Activated CD4-positive, alpha-beta memory T cell treated with anti-CD3 and anti-CD28 coated beads for 36 hours (primary cell): ENCODE measurements at regions of chr16 and their contacts with region 1.

Region 1: DNA sequence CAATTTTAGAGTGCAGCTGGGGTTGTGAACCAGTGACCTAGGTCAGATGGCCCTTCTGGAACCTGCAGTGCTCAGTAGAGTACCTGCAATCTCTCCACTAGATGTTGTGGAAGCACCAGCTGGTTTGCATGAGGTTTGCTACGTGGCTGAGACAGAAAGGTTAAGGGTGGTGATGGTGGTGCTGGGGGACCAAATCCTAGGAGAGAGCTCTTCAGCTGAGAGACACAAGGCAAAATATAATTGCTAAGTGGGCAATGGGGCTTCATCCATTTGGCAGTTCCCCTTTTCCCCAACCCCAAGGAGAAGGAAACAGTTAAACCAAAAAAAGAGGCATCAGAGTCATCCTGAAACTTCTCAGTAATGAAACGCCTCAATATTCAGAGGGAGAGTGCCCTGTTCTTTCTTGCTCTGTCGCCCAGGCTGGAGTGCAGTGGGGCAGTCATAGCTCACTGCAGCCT is 13.9 kb downstream of the ITPRIPL2 start:
- DNase-seq: peak; percentile 33
- H3K4me3 Mint-ChIP-seq: no peak overlapping the region
- H3K27ac Mint-ChIP-seq: peak overlapping the region; percentile 82
- H3K4me1 Mint-ChIP-seq: peaks cover 35% of the 10 kb centered on the region
- H3K27me3 Mint-ChIP-seq: peaks cover 2% of the 10 kb centered on the region

Region 2: DNA sequence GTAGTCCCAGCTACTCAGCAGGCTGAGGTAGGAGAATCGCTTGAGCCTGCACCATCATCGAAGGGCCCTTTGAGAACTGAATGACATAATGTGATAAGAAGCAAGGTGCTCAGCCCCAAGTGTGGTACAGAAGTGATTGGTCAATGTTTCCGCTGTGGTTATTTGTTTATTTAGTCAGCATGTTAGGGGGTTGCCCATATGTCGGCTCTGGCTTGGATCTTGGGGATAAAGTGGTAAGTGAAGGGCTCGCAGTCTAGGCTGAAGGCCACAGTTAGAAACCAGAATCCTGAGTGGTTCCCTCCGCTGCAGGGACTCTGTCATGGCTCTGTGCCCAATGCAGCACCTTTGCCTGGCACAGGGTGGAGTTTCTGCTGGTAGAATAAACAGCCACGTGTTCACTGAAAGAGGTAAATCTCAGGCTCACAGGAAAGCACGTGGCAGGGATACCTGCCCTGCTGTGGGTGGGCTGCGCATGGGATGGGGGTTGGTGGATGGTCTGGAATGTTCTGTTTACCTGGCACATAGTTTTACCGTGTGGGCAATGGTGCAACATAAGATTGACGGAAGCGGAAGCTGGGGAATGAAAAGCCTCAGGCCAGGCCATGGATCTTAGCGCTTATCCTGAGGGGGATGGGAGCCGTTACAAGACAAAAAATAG is 75.8 kb after region 1 on chr16:
- CTCF ChIA-PET with region 1: no interaction called
- POLR2A ChIA-PET with region 1: no interaction called
- intact Hi-C with region 1: no loop called
- DNase-seq: no peak
- H3K4me3 Mint-ChIP-seq: no peak overlapping the region
- H3K27ac Mint-ChIP-seq: no peak overlapping the region
- H3K4me1 Mint-ChIP-seq: no peaks in the 10 kb centered on the region
- H3K27me3 Mint-ChIP-seq: no peaks in the 10 kb centered on the region

Region 3: DNA sequence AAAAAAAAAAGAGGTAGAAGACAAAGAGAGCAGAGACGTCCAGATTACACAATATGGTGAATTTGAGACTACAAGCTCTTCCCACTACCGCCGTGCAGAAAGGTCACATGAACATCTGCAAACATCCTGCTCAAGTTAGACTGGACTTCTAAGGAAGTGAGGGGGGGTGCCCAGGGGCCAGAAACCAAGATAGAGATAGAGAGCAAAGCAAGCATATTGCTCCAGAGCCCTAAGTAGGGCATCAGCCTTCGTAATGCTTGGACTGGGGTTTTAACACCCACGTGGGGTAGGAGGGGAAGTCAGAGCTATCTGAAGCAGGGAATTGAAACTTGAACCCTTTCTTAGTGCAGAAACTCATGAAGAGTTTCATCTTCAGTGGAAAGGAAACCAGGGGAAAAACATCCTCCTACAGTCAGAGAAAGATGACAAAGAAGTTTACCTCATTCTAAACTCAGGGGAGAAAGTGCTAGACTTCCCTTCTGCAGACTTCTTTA is 166.5 kb after region 1 on chr16:
- CTCF ChIA-PET with region 1: no interaction called
- POLR2A ChIA-PET with region 1: no interaction called
- intact Hi-C with region 1: loop called (anchors 2 kb)
- DNase-seq: peak; percentile 73
- H3K4me3 Mint-ChIP-seq: peak overlapping the region; percentile 2
- H3K27ac Mint-ChIP-seq: peak overlapping the region; percentile 76
- H3K4me1 Mint-ChIP-seq: peaks cover 28% of the 10 kb centered on the region
- H3K27me3 Mint-ChIP-seq: peaks cover 13% of the 10 kb centered on the region